Posterior vena cava (tissue), 2 donors: ENCODE measurements at regions of chr4 and their contacts with region 1.

Region 1: DNA sequence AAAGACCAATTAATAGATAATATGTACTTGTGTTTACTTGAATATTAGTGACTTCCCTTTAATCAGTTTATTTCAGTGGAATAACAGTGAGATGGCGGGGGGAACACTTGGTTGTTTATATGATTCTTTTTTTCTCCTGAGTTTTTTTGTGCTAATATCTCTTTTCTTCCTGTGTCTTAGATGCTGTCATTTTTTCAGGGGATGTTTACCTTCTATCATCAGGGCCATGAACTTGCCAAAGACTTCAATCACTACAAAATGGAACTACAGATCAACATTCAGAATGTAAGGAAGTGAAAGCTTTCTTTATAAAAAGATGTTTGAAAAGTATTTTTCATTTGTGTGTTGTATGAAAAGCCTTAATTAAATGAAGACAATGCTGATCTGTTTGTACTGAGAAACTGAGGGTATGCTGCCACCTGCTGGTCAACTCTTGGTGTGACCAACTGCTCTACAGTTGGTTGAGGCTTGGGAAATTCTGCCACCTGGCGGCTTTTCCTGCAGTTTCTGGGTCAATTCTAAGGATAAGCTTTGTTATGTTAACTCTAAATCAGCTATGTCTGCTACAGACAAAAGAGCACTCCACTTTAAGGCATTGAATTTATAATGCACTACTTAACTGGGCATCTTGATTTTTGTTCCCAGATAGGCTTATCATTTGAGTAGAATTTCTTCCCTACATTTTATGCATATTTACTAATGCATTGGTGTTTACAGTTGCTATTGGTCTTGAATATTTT is 134.8 kb downstream of the ARHGAP10 start:
- DNase-seq: peak; percentile 97

Region 2: DNA sequence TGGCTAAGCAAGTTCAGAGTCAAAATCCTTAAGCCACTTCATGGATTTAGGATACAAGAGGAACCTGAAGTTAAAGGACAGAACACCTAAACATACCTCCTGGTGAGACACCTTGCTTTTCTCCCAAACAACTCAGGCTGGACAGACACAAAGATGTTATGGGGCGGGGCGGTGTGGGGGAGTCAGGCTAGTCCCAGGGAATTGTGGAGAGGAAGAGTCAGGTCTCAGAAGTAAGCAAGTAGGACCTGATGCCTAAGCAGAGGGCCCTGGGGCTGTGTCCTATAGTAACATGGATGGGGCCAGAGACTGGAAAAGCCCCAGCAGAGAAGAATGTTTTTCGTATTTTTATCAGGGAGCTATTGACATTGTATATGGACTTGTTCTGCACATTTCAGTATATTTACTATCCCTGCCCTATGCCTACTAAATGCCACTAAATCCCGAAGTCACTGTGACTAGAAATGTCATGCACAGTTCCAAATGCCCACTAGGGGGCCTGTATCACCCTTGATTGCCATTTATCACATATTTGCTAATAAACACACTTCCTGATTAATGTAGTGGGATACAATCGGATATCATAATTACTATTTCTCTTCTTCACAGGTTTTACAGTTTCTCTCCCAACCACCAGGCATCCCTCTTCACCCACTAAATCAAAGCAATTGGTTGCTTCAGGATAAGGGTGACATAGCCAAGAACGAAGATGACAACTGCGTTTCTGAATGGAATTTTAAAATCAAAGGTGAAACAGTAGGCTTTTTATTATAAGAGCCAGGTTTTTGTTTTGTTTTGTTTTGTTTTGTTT is 158.6 kb before region 1 on chr4:
- intact Hi-C with region 1: loop called (anchors 5 kb)
- DNase-seq: no peak

Region 3: DNA sequence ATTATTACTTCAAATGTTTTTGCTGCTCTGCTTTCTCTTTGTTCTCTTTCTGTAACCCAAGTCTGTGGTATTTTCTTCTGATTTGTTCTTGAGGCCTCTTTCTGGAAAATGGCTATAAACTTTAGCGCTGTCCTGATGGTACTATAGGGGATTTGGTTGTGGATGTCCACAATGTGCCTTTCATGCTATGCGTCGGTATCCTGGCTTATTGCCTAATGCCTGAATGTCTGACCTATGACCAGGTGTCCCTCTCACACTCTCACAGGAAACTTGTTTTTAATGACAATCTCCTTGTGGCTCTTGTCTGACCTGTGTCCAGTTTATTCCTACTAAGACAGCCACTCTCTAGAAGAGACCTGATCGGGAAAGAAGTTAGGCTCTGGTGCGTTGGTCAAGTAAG is 797.9 kb after region 1 on chr4:
- intact Hi-C with region 1: loop called in 1 of 2 experiments (anchors 5 kb)
- DNase-seq: no peak

Region 4: DNA sequence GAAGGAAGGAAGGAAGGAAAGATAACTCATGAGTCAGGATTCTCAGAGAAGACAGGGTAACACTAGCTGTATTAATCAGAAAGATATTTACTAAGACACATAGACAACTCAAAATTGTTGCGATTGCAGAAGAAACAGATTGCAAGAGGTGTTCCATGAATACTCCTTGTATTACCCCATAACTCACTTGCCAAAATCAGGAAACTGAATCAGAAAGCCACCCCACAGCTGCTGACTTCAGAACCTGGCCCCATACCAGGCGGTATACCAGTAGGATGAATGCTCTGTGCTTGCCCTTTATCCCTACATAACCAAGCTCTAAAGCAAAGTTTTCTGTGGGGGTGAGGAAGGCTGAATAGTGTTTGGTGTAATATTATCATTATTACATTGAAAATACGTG is 1480.4 kb after region 1 on chr4:
- intact Hi-C with region 1: no loop called
- DNase-seq: no peak